Sigmoid colon (tissue), 7 donors: ENCODE measurements at regions of chr7 and their contacts with region 1.

Region 1: GRCh38 chr7:98021588-98022351 is 31.8 kb upstream of the OCM2 start:
- DNase-seq: peak; percentile 68
- H3K4me3 ChIP-seq: no peak overlapping the region
- H3K27ac ChIP-seq: no peak overlapping the region
- H3K4me1 ChIP-seq: no peaks in the 10 kb centered on the region
- H3K27me3 ChIP-seq: peaks cover 0 to 6% (median 0%) of the 10 kb centered on the region in 3 donors
- CTCF ChIP-seq: peak; percentile 27 to 88 (median 72)
- EP300 ChIP-seq: no peak
- POLR2A ChIP-seq: no peak

Region 2: GRCh38 chr7:97722386-97722785 is 299.4 kb before region 1 on chr7:
- intact Hi-C with region 1: no loop called
- DNase-seq: no peak
- H3K4me3 ChIP-seq: no peak overlapping the region
- H3K27ac ChIP-seq: no peak overlapping the region
- H3K4me1 ChIP-seq: no peaks in the 10 kb centered on the region
- H3K27me3 ChIP-seq: no peaks in the 10 kb centered on the region
- CTCF ChIP-seq: no peak
- EP300 ChIP-seq: no peak
- POLR2A ChIP-seq: no peak

Region 3: DNA sequence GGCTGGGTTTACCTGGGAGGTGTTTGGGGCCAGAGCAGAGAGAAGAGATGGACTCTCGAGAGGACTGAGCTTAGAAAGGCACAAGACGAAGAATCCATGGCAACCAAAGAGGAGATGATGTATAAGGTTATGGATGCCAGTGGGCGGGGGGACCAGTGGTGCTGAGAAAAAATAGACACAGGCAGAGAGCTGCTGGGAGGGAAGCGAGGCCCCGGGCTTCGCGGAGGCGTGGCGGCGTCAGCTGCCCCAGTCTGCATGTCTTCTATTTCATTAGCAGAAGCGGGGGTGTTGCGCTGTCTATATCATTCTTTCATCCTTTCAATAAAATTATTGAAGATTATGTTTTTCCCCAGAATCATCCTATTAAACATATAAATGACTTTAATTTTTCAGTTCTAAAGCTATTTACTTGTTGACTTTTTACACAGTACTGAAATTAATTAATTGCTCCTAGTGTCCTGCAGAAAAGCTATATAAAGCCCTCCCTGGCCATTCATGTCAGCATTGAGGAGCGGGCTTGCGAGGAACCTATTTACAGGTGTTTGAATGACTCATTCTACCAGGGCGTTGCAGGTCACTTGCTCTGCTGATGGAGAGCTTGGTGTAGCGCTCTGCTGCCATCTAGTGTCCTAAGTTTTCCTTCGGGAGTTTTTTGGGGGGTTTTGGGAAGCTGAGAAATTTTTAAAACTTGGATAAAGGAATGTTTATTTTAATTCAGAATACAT is 146.6 kb after region 1 on chr7:
- intact Hi-C with region 1: loop called (anchors 2 kb)
- DNase-seq: no peak
- H3K4me3 ChIP-seq: no peak overlapping the region
- H3K27ac ChIP-seq: no peak overlapping the region
- H3K4me1 ChIP-seq: peaks cover 0 to 15% (median 12%) of the 10 kb centered on the region in 4 donors
- H3K27me3 ChIP-seq: no peaks in the 10 kb centered on the region
- CTCF ChIP-seq: peak; percentile 55 to 83 (median 61)
- EP300 ChIP-seq: no peak
- POLR2A ChIP-seq: no peak

Region 4: GRCh38 chr7:98284335-98285036 is 262.7 kb after region 1 on chr7:
- intact Hi-C with region 1: no loop called
- DNase-seq: peak; percentile 88
- H3K4me3 ChIP-seq: peak overlapping the region; percentile 90 to 100 (median 100)
- H3K27ac ChIP-seq: peak overlapping the region; percentile 95 to 97 (median 96)
- H3K4me1 ChIP-seq: peaks cover 0 to 80% (median 73%) of the 10 kb centered on the region in 4 donors
- H3K27me3 ChIP-seq: no peaks in the 10 kb centered on the region
- CTCF ChIP-seq: no peak
- EP300 ChIP-seq: no peak
- POLR2A ChIP-seq: no peak